ENCODE measurements at regions of chr11 and their contacts with region 1.

Region 1: GRCh38 chr11:96641261-96641660 is 251.4 kb downstream of the JRKL start:
- DNase-seq: peak in 1 of 2 experiments; percentile 38
- H3K4me3 ChIP-seq: no peak overlapping the region
- H3K4me3 Mint-ChIP-seq: peak overlapping the region; percentile 40
- H3K27ac Mint-ChIP-seq: peak overlapping the region; percentile 80
- H3K4me1 ChIP-seq: peaks cover 34% of the 10 kb centered on the region
- H3K4me1 Mint-ChIP-seq: peaks cover 40% of the 10 kb centered on the region
- H3K27me3 ChIP-seq: no peaks in the 10 kb centered on the region
- H3K27me3 Mint-ChIP-seq: no peaks in the 10 kb centered on the region
- CTCF ChIP-seq: no peak

Region 2: DNA sequence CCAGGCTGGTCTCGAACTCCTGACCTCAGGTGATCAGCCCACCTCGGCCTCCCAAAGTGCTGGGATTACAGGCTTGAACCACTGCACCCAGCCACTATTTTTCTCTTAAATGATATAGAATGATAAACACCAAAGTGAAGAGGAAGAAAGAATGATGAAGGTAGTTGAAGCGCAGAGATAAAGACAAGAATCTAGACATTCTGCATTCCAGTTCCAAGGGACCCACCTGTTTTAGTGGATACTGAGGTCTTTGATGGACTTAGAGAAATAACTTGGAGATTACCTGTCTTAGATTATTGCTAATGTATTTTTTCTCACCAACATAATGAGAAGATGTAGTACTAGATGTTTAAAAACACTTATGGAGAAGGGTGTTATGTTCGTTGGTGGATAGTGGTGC is 36.8 kb before region 1 on chr11:
- CTCF ChIA-PET with region 1: no interaction called
- POLR2A ChIA-PET with region 1: no interaction called
- intact Hi-C with region 1: loop called (anchors 1 kb)
- DNase-seq: peak in 1 of 2 experiments; percentile 18
- H3K4me3 ChIP-seq: no peak overlapping the region
- H3K4me3 Mint-ChIP-seq: peak overlapping the region; percentile 13
- H3K27ac Mint-ChIP-seq: peak overlapping the region; percentile 70
- H3K4me1 ChIP-seq: peaks cover 21% of the 10 kb centered on the region
- H3K4me1 Mint-ChIP-seq: peaks cover 10% of the 10 kb centered on the region
- H3K27me3 ChIP-seq: no peaks in the 10 kb centered on the region
- H3K27me3 Mint-ChIP-seq: no peaks in the 10 kb centered on the region
- CTCF ChIP-seq: no peak

Region 3: DNA sequence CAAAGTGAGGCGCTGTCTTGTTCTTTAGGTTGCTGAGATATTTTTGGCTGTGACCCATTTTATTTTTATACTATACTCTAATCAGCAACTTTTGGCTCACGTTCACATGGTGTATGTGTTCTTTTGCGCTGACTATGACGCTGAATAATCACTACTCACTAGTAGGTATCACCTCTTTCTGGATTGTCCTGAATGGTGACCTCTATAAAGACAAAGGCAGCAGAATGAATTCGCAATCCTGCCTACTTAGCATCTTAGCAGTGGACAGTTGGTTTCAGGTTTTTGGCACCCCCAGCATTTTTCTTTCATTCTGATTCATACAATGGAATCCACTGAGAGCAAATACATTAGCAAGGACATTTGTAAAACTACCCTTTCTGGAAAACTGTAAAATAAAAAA is 99.8 kb after region 1 on chr11:
- CTCF ChIA-PET with region 1: no interaction called
- POLR2A ChIA-PET with region 1: no interaction called
- intact Hi-C with region 1: loop called (anchors 1 kb)
- DNase-seq: no peak
- H3K4me3 ChIP-seq: no peak overlapping the region
- H3K4me3 Mint-ChIP-seq: no peak overlapping the region
- H3K27ac Mint-ChIP-seq: no peak overlapping the region
- H3K4me1 ChIP-seq: peaks cover 10% of the 10 kb centered on the region
- H3K4me1 Mint-ChIP-seq: peaks cover 12% of the 10 kb centered on the region
- H3K27me3 ChIP-seq: no peaks in the 10 kb centered on the region
- H3K27me3 Mint-ChIP-seq: peaks cover 3% of the 10 kb centered on the region
- CTCF ChIP-seq: no peak

Measured in Caco-2 (cell line).